ENCODE measurements at regions of chr2 and their contacts with region 1.

Region 1: DNA sequence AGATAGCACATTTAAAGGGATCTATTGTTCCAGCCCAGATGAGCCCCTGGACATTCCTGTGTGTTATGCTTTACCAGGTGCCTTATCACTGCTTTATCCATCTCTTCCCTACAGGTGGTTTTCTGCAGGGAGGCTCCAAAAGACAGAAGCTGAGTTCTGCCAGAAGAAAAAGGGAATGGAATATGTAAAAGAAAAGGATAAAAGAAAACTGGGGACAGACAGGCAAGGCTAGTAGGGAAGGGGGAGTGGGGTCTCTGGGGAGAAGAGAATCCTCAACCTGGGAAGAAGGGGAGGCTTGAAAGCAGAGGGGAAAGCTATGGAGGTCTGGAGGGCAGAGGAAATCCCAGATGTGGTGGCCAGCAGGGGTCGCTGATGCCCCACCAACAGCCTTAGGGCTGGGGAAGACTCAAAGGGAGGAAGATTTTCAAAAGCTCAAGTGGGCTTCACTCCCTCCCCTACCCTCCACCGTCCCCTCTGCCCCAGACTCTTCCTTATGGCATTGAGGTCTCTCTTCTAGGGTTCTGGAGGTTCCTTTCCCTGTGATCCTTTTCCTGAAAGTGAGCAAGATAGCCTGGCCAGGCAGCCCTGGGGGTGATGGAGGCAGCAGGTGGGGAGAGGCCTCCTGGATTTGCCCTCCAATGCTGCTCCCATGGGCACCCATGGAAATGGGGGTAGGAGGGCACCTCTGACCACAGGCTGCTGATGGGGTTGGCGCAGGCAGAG is 178.1 kb upstream of the PKDCC start:
- DNase-seq: peak; percentile 55
- ATAC-seq: peak; percentile 77
- H3K4me3 ChIP-seq: no peak overlapping the region
- H3K27ac ChIP-seq: no peak overlapping the region
- H3K4me1 ChIP-seq: peaks cover 22% of the 10 kb centered on the region
- H3K27me3 ChIP-seq: no peaks in the 10 kb centered on the region
- CTCF ChIP-seq: peak; percentile 94
- POLR2A ChIP-seq: 0 out of 2 replicates have a peak, but pooled peaks have one; percentile 28
- RAD21 ChIP-seq: peak; percentile 98

Region 2: GRCh38 chr2:41933585-41934320 is 64.0 kb after region 1 on chr2:
- CTCF ChIA-PET with region 1: no interaction called
- POLR2A ChIA-PET with region 1: no interaction called
- dilution Hi-C with region 1: no loop called
- in situ Hi-C with region 1: no loop called
- intact Hi-C with region 1: loop called (anchors 2 kb)
- DNase-seq: peak; percentile 96
- ATAC-seq: peak; percentile 70
- H3K4me3 ChIP-seq: no peak overlapping the region
- H3K27ac ChIP-seq: peak overlapping the region; percentile 79; the same call in 1 of the 2 replicates
- H3K4me1 ChIP-seq: peaks cover 39% of the 10 kb centered on the region
- H3K27me3 ChIP-seq: no peaks in the 10 kb centered on the region
- CTCF ChIP-seq: no peak
- POLR2A ChIP-seq: no peak
- RAD21 ChIP-seq: peak; percentile 7; the same call in 1 of the 2 replicates

Region 3: DNA sequence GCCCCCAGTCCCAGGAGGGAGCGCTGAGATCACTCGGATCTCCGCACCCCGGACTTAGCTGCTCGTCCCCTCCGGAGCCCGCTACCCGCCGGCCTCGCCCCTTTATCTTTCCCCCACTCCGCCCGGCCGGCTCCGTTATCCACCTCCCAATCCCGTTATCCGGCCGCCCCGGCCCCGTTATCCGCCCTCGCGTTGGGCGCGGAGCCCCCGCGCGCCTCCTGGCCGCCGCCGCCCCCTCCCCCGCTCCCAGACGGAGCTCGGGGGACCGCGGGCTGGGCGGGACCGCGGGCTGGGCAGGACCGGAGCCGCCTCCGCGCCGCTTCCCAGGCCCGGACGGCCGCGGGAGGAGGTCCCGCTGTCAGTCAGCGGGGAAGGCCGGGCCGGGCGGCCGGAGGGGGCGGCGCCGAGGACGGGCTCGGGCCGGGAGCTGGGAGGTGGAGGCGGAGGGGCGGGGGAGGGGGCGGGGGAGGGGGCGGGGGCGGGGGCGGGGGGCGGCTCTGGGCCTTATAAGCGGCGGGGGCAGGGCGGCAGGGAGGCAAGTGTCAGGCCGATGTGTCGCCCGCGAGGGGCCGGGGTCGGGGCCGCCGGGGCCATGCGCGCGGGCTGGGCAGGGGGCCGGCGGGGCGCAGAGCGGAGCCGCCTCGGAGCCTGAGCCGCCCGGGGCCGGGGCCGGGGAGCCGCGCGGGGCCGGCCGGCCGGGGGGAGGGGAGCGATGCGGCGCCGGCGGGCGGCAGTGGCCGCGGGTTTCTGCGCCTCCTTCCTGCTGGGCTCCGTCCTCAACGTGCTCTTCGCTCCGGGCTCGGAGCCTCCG is 178.0 kb after region 1 on chr2 and contains the start of gene PKDCC:
- CTCF ChIA-PET with region 1: interaction called, 5 read pairs
- POLR2A ChIA-PET with region 1: no interaction called
- dilution Hi-C with region 1: no loop called
- in situ Hi-C with region 1: no loop called
- intact Hi-C with region 1: loop called (anchors 1 kb)
- DNase-seq: peak; percentile 79
- ATAC-seq: peak; percentile 88
- H3K4me3 ChIP-seq: peak within 1 kb of the TSS; percentile 94
- H3K27ac ChIP-seq: peak within 1 kb of the TSS; percentile 84
- H3K4me1 ChIP-seq: peaks cover 24% of the 10 kb centered on the region
- H3K27me3 ChIP-seq: no peaks in the 10 kb centered on the region; the same call in 1 of the 2 replicates
- CTCF ChIP-seq: no peak
- POLR2A ChIP-seq: no peak
- RAD21 ChIP-seq: no peak; the same call in 1 of the 2 replicates
- total RNA-seq, gene PKDCC: 50.3 and 55.6 TPM in 2 replicates

Region 4: DNA sequence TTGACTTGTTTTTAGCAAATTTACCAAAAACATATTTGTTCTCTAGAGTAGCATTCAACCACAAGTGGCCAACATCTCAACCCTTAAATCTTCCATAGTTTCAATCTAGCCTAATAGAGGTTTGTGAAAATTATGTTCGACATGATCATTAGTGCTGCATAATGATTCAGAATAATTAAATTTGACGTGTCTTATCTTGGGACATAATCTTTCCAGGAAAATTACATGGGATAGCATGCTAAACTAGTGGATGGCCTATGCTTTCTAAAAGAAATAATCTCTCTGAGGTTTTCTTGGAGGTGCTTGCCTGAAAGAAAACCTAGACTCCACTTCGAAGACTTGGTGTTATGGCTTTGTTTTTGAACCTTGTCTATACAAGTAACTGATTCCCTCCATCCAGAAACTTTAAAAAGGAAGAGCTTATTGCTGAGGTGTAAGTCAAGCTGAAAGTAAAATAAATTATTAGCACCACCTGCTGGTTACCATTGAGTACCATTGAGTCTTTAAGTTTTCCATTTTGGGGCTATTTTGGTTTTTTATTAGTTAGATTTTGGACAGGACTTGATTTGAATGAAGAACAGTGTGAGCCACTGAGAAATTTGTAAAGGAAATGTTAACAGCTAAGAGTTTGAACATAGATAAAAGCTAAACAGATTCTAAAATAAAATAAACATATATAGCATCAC is 458.6 kb after region 1 on chr2:
- CTCF ChIA-PET with region 1: no interaction called
- POLR2A ChIA-PET with region 1: no interaction called
- dilution Hi-C with region 1: no loop called
- in situ Hi-C with region 1: no loop called
- intact Hi-C with region 1: loop called (anchors 10 kb)
- DNase-seq: peak; percentile 57
- ATAC-seq: peak; percentile 56; the same call in 1 of the 2 replicates
- H3K4me3 ChIP-seq: no peak overlapping the region
- H3K27ac ChIP-seq: no peak overlapping the region
- H3K4me1 ChIP-seq: no peaks in the 10 kb centered on the region; the same call in 1 of the 2 replicates
- H3K27me3 ChIP-seq: no peaks in the 10 kb centered on the region
- CTCF ChIP-seq: peak; percentile 58
- POLR2A ChIP-seq: no peak
- RAD21 ChIP-seq: peak; percentile 57

Measured in IMR-90 (cell line).